T-cell (primary cell): ENCODE measurements at regions of chr22 and their contacts with region 1.

Region 1: DNA sequence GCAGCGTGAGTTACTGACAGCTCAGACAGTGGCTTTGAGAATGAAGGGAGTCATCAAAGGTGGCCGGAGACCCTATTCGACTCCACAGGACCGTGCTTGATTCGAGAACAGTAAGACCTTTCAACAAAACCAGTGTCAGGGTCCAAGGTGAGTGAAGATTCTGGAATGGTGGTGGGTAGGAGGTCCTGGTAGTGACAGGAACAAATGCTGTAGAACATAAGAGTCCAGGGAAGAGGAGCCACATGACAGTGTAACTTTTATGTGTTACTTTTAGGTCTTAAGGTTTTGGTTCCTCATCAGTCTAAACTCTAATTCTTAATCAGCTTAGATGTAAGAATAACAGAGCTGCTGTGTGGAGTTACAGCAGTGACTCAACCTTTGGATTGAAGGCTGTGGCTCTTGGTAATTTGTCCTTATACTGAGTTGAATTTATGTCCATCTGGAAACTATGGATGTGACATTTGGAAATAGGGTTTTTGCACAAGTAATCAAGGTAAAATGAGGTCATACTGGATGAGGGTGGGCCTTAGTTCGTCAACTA is 1.8 kb downstream of the TBC1D22A start:
- DNase-seq: no peak
- ATAC-seq: no peak
- H3K4me3 ChIP-seq: no peak overlapping the region
- H3K4me3 Mint-ChIP-seq: peak overlapping the region; percentile 99
- H3K27ac ChIP-seq: peak overlapping the region; percentile 47
- H3K27ac Mint-ChIP-seq: peak overlapping the region; percentile 99 to 100
- H3K4me1 ChIP-seq: peaks cover 8 to 60% of the 10 kb centered on the region in 2 experiments
- H3K4me1 Mint-ChIP-seq: peaks cover 67 to 74% (median 68%) of the 10 kb centered on the region in 3 donors
- H3K27me3 ChIP-seq: no peaks in the 10 kb centered on the region
- H3K27me3 Mint-ChIP-seq: no peaks in the 10 kb centered on the region

Region 2: DNA sequence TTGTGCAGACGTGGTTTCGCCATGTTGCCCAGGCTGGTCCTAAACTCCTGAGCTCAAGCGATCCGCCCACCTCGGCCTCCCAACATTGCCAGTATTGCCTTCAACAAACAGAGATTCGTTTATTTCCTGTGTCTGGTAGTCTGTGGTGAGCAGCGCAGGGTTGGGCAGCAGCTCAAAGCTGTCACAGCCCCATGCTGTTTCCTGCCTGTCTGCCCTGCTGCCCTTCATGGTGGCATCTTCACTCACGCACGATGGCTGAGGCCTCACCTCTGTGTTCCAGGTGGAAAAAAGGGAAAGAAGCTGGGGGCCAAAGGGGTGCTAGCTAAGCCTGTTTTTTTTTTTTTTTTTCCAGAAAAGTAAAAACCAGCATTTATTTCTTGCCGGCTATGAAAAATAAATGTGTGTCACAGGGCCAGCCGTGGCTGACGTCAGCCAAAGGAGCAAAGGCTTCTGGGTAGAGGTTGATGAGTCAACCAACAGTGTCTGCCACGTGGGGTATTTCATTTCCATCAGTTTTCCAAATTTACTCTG is 27.1 kb after region 1 on chr22:
- CTCF ChIA-PET with region 1: interaction called in 1 of 2 experiments, 10 read pairs
- POLR2A ChIA-PET with region 1: interaction called, 8 to 10 read pairs
- DNase-seq: peak; percentile 59 to 91 (median 77)
- ATAC-seq: peak; percentile 96 to 98 (median 98)
- H3K4me3 ChIP-seq: peak overlapping the region; percentile 36 to 57
- H3K4me3 Mint-ChIP-seq: peak overlapping the region; percentile 72 to 80 (median 75)
- H3K27ac ChIP-seq: peak overlapping the region; percentile 94
- H3K27ac Mint-ChIP-seq: peak overlapping the region; percentile 99 to 100
- H3K4me1 ChIP-seq: peaks cover 17 to 50% of the 10 kb centered on the region in 2 experiments
- H3K4me1 Mint-ChIP-seq: peaks cover 52 to 62% (median 58%) of the 10 kb centered on the region in 3 donors
- H3K27me3 ChIP-seq: no peaks in the 10 kb centered on the region
- H3K27me3 Mint-ChIP-seq: no peaks in the 10 kb centered on the region